ENCODE measurements at regions of chr12 and their contacts with region 1.

Region 1: DNA sequence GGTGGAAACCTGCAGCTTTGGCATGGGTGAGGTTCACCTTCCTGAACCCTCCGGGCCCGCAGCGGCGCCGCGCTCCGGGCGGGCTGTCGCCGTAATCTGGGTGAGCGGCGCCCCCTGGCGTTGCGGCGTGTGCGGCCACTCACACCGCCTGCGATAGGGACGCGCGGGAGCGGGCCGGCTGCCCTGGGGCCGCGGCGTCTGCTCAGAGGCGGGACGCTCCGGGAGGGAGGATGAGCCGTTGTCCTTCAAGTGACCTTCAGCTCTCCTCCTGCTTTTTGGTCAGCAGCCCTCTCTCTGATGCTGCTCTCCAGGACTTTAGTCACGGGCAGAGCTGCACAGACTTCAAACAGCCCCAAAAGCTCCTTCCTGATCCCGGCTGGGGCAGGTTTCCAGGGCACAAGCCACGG is 211.7 kb upstream of the FKBP4 start:
- DNase-seq: peak; percentile 42 to 76
- H3K4me3 ChIP-seq: peak overlapping the region; percentile 7 to 23
- H3K27ac ChIP-seq: peak overlapping the region; percentile 35 to 53
- H3K4me1 ChIP-seq: peaks cover 0 to 13% (median 10%) of the 10 kb centered on the region in 4 donors
- H3K27me3 ChIP-seq: no peaks in the 10 kb centered on the region
- CTCF ChIP-seq: peak; percentile 90 to 92

Region 2: GRCh38 chr12:1804545-1805332 is 778.4 kb before region 1 on chr12:
- intact Hi-C with region 1: loop called (anchors 10 kb)
- DNase-seq: peak; percentile 89 to 90
- H3K4me3 ChIP-seq: no peak overlapping the region
- H3K27ac ChIP-seq: peak overlapping the region in 1 of 2 donors; percentile 28
- H3K4me1 ChIP-seq: peaks cover 0 to 5% (median 0%) of the 10 kb centered on the region in 4 donors
- H3K27me3 ChIP-seq: no peaks in the 10 kb centered on the region
- CTCF ChIP-seq: no peak

Region 3: DNA sequence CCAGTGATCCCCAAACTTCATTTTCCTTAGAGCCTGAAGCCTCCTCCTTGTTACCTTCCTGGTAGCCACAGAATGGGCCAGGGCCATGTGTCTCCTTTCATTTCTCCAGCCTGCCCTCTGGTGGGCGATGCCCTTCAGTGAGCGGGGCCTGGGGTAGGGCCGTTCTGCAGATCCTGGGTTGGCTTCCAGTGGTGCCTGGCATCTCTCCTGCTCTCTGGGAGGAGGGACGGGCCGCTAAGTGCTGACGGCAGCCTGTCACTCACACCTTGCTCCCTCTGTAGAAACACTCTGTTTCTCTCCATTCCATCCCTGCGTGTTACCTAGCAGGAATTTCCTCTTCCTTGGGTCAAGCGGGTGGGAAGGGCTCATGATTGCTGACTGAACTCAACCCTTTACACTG is 298.2 kb before region 1 on chr12:
- intact Hi-C with region 1: loop called (anchors 10 kb)
- DNase-seq: peak; percentile 72 to 89
- H3K4me3 ChIP-seq: no peak overlapping the region
- H3K27ac ChIP-seq: peak overlapping the region; percentile 81 to 83
- H3K4me1 ChIP-seq: peaks cover 0 to 81% (median 58%) of the 10 kb centered on the region in 4 donors
- H3K27me3 ChIP-seq: no peaks in the 10 kb centered on the region
- CTCF ChIP-seq: peak; percentile 61 to 64

Region 4: GRCh38 chr12:2439332-2440100 is 143.6 kb before region 1 on chr12:
- intact Hi-C with region 1: no loop called
- DNase-seq: no peak
- H3K4me3 ChIP-seq: no peak overlapping the region
- H3K27ac ChIP-seq: no peak overlapping the region
- H3K4me1 ChIP-seq: peaks cover 0 to 20% (median 4%) of the 10 kb centered on the region in 4 donors
- H3K27me3 ChIP-seq: no peaks in the 10 kb centered on the region
- CTCF ChIP-seq: no peak

Region 5: GRCh38 chr12:4486980-4487379 is 1903.9 kb after region 1 on chr12:
- intact Hi-C with region 1: no loop called
- DNase-seq: no peak
- H3K4me3 ChIP-seq: no peak overlapping the region
- H3K27ac ChIP-seq: no peak overlapping the region
- H3K4me1 ChIP-seq: no peaks in the 10 kb centered on the region
- H3K27me3 ChIP-seq: no peaks in the 10 kb centered on the region
- CTCF ChIP-seq: no peak

Measured in tibial artery (tissue), 4 donors.